ENCODE measurements at regions of chr9 and their contacts with region 1.

Region 1: DNA sequence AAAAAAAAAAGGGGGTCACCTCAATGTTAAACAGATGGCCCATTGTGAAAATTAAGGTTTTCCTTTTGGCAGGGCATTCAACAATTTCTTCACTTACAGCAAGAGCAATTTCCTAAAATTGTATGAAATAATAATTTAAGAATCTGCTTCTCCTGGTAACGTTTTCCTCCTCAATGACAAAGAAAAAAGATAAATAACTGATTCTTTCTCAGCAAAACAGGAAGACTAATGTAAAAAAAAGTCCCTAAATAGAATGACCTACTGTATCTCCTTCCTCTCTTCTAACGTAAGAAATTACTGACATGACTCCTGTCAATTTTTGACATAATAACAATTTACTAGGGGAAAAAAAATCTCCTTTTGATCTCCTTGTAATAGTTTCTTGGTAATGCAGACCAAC is 25.5 kb downstream of the ABHD17B start:
- DNase-seq: no peak
- H3K4me3 ChIP-seq: no peak overlapping the region
- H3K27ac ChIP-seq: no peak overlapping the region
- H3K4me1 ChIP-seq: no peaks in the 10 kb centered on the region
- H3K27me3 ChIP-seq: no peaks in the 10 kb centered on the region
- CTCF ChIP-seq: no peak

Region 2: GRCh38 chr9:70374962-70375618 is 1510.4 kb before region 1 on chr9:
- CTCF ChIA-PET with region 1: no interaction called
- POLR2A ChIA-PET with region 1: no interaction called
- intact Hi-C with region 1: loop called (anchors 10 kb)
- DNase-seq: no peak
- H3K4me3 ChIP-seq: no peak overlapping the region
- H3K27ac ChIP-seq: no peak overlapping the region
- H3K4me1 ChIP-seq: no peaks in the 10 kb centered on the region
- H3K27me3 ChIP-seq: no peaks in the 10 kb centered on the region
- CTCF ChIP-seq: no peak

Region 3: GRCh38 chr9:72254901-72255535 is 369.6 kb after region 1 on chr9:
- CTCF ChIA-PET with region 1: no interaction called
- POLR2A ChIA-PET with region 1: interaction called, 11 read pairs
- intact Hi-C with region 1: no loop called
- DNase-seq: no peak
- H3K4me3 ChIP-seq: no peak overlapping the region
- H3K27ac ChIP-seq: no peak overlapping the region
- H3K4me1 ChIP-seq: no peaks in the 10 kb centered on the region
- H3K27me3 ChIP-seq: no peaks in the 10 kb centered on the region
- CTCF ChIP-seq: no peak

Region 4: GRCh38 chr9:72454871-72455491 is 569.5 kb after region 1 on chr9:
- CTCF ChIA-PET with region 1: no interaction called
- POLR2A ChIA-PET with region 1: no interaction called
- intact Hi-C with region 1: no loop called
- DNase-seq: no peak
- H3K4me3 ChIP-seq: no peak overlapping the region
- H3K27ac ChIP-seq: no peak overlapping the region
- H3K4me1 ChIP-seq: peaks cover 18% of the 10 kb centered on the region; the same call in 1 of the 2 replicates
- H3K27me3 ChIP-seq: no peaks in the 10 kb centered on the region
- CTCF ChIP-seq: no peak

Region 5: DNA sequence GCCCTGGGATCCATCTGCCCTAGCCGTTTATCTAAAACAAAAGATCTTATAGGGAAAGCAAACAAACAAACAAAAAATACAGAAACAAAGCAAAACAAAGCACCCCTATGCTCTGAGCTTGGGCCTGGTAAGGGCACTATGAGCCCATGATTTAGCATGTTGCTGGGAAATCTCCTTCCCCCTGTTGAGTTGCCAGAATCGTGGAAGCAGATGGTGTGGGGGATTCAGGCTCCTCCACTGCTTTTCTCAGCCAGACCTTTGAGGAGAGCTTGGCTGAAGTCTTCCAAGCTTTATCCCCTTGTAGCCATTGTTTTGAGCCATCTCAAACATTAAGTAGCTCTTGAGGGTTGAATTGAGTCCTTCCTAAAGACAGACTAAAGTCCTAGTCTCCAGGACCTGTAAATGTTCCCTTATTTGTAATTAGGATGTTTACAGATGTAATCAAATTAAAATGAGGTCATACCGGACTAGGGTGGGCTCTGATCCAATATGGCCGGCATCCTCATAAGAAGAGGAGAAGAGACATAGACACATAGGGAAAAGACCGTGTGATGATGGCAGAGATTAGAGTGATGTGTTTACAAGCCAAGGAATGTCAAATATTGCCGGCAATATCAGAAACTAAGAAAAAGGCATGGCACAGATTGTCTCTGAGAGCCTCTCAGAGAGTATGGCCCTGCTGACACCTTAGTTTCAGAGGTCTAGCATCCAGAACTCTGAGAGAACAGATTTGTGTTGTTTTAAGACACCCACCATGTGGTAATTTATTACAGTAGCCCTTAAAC is 666.0 kb after region 1 on chr9:
- CTCF ChIA-PET with region 1: no interaction called
- POLR2A ChIA-PET with region 1: interaction called, 15 read pairs
- intact Hi-C with region 1: no loop called
- DNase-seq: no peak
- H3K4me3 ChIP-seq: no peak overlapping the region
- H3K27ac ChIP-seq: no peak overlapping the region
- H3K4me1 ChIP-seq: peaks cover 45% of the 10 kb centered on the region
- H3K27me3 ChIP-seq: no peaks in the 10 kb centered on the region
- CTCF ChIP-seq: no peak